Gastrocnemius medialis (tissue), 4 donors: ENCODE measurements at regions of chr17 and their contacts with region 1.

Region 1: GRCh38 chr17:49063652-49064051 is 66.5 kb downstream of the IGF2BP1 start:
- DNase-seq: no peak
- ATAC-seq: no peak
- H3K4me3 ChIP-seq: no peak overlapping the region
- H3K27ac ChIP-seq: no peak overlapping the region
- H3K4me1 ChIP-seq: no peaks in the 10 kb centered on the region
- H3K27me3 ChIP-seq: peaks cover 0 to 2% (median 0%) of the 10 kb centered on the region in 3 donors
- CTCF ChIP-seq: no peak
- POLR2A ChIP-seq: no peak

Region 2: GRCh38 chr17:48954300-48954755 is 109.3 kb before region 1 on chr17:
- in situ Hi-C with region 1: loop called in 1 of 4 experiments (anchors 25 kb)
- intact Hi-C with region 1: no loop called
- DNase-seq: no peak
- ATAC-seq: no peak
- H3K4me3 ChIP-seq: no peak overlapping the region
- H3K27ac ChIP-seq: no peak overlapping the region
- H3K4me1 ChIP-seq: no peaks in the 10 kb centered on the region
- H3K27me3 ChIP-seq: peaks cover 22 to 42% (median 40%) of the 10 kb centered on the region in 3 donors
- CTCF ChIP-seq: no peak
- POLR2A ChIP-seq: no peak